ENCODE measurements at regions of chr17 and their contacts with region 1.

Region 1: GRCh38 chr17:79839363-79840268 is at the start of gene CBX4:
- DNase-seq: no peak
- ATAC-seq: peak; percentile 75
- H3K4me3 ChIP-seq: peak within 1 kb of the TSS; percentile 95
- H3K27ac ChIP-seq: peak within 1 kb of the TSS; percentile 69
- H3K4me1 ChIP-seq: peaks cover 21% of the 10 kb centered on the region
- H3K27me3 ChIP-seq: peaks cover 22 to 32% of the 10 kb centered on the region in 2 experiments
- CTCF ChIP-seq: peak; percentile 58 to 74 (median 64); a peak in 5 of 6 replicates
- EP300 ChIP-seq: no peak
- POLR2A ChIP-seq: peak; percentile 91
- RAD21 ChIP-seq: peak; percentile 18; the same call in 1 of the 2 replicates
- polyA plus RNA-seq, gene CBX4: 0.69 to 1.2 TPM

Region 2: GRCh38 chr17:79749156-79749815 is 90.3 kb before region 1 on chr17:
- CTCF ChIA-PET with region 1: interaction called, 5 read pairs
- POLR2A ChIA-PET with region 1: interaction called, 5 read pairs
- RAD21 ChIA-PET with region 1: no interaction called
- SMC1A ChIA-PET with region 1: no interaction called
- in situ Hi-C with region 1: no loop called
- intact Hi-C with region 1: loop called (anchors 5 kb)
- DNase-seq: no peak
- ATAC-seq: no peak
- H3K4me3 ChIP-seq: no peak overlapping the region
- H3K27ac ChIP-seq: no peak overlapping the region
- H3K4me1 ChIP-seq: peaks cover 13% of the 10 kb centered on the region
- H3K27me3 ChIP-seq: peaks cover 0 to 4% of the 10 kb centered on the region in 2 experiments; a peak in 2 of 4 replicates
- CTCF ChIP-seq: no peak
- EP300 ChIP-seq: no peak
- POLR2A ChIP-seq: no peak
- RAD21 ChIP-seq: no peak

Region 3: GRCh38 chr17:79796763-79797491 is 42.7 kb before region 1 on chr17 and contains the start of gene CBX8:
- CTCF ChIA-PET with region 1: interaction called, 6 read pairs
- POLR2A ChIA-PET with region 1: interaction called, 15 read pairs
- RAD21 ChIA-PET with region 1: interaction called, 10 read pairs
- SMC1A ChIA-PET with region 1: interaction called, 3 read pairs
- in situ Hi-C with region 1: no loop called
- intact Hi-C with region 1: loop called (anchors 5 kb)
- DNase-seq: peak; percentile 94
- ATAC-seq: peak; percentile 91
- H3K4me3 ChIP-seq: peak within 1 kb of the TSS; percentile 83
- H3K27ac ChIP-seq: peak within 1 kb of the TSS; percentile 64
- H3K4me1 ChIP-seq: peaks cover 29% of the 10 kb centered on the region
- H3K27me3 ChIP-seq: peaks cover 16 to 36% of the 10 kb centered on the region in 2 experiments
- CTCF ChIP-seq: peak in 1 of 3 experiments; percentile 11; a peak in 1 of 6 replicates
- EP300 ChIP-seq: no peak
- POLR2A ChIP-seq: peak; percentile 83
- RAD21 ChIP-seq: no peak
- polyA plus RNA-seq, gene CBX8: 0.03 to 0.16 TPM

Region 4: GRCh38 chr17:79803997-79804855 is 35.4 kb before region 1 on chr17:
- CTCF ChIA-PET with region 1: interaction called, 6 read pairs
- POLR2A ChIA-PET with region 1: interaction called, 8 read pairs
- RAD21 ChIA-PET with region 1: interaction called, 10 read pairs
- SMC1A ChIA-PET with region 1: interaction called, 7 read pairs
- in situ Hi-C with region 1: loop called (anchors 5 kb)
- intact Hi-C with region 1: loop called (anchors 5 kb)
- DNase-seq: peak; percentile 43
- ATAC-seq: peak; percentile 82
- H3K4me3 ChIP-seq: peak overlapping the region; percentile 34; the same call in 1 of the 2 replicates
- H3K27ac ChIP-seq: no peak overlapping the region
- H3K4me1 ChIP-seq: peaks cover 46% of the 10 kb centered on the region
- H3K27me3 ChIP-seq: peaks cover 31 to 48% of the 10 kb centered on the region in 2 experiments
- CTCF ChIP-seq: no peak
- EP300 ChIP-seq: peak in 1 of 2 experiments; percentile 38; a peak in 1 of 4 replicates
- POLR2A ChIP-seq: peak; percentile 66
- RAD21 ChIP-seq: no peak

Region 5: DNA sequence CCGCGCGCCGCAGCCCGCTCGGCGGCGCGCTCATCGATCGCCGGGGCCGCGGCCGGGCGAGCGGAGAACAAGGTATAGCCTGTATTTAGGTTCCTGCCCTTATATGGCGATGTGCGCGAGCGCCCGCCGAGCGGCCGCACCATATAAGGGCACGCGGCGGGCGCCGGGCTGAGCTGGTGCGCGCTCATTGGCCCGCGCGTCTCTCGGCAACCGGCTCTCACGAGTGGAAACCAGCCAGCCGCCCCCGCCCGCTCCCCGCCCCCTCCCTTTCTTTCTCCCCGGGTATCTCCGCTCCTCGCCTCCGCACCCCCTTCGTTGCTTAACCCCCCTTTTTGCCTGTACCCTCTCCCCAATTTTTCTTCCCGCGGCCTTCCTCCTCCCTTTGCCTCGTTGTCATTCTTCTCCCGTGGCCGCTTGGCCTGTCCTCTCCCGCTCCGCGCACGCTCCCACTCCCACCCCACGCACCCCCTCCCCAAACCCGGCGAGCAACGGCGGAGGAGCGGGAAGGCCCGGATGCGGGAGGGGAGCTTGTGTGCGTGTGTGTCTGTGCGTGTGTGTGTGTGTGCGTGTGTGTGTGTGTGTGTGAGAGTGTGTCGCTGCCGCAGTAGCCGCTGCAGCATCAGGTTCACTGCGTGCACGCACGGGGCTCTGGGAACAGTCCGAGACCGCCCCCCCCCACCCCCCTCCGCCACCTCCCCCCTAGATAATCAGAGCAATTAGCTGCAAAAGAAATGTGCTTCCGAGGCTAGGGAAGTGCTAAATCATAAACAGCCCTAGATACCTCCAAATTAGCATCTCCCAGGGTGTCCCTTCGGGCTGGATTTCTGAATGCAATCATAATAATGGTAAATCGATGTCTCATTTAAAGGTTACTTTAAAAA is 29.2 kb before region 1 on chr17:
- CTCF ChIA-PET with region 1: interaction called, 19 read pairs
- POLR2A ChIA-PET with region 1: interaction called, 10 read pairs
- RAD21 ChIA-PET with region 1: interaction called, 10 read pairs
- SMC1A ChIA-PET with region 1: interaction called, 7 read pairs
- in situ Hi-C with region 1: loop called (anchors 5 kb)
- intact Hi-C with region 1: no loop called
- DNase-seq: no peak
- ATAC-seq: peak; percentile 95
- H3K4me3 ChIP-seq: peak overlapping the region; percentile 60; the same call in 1 of the 2 replicates
- H3K27ac ChIP-seq: no peak overlapping the region
- H3K4me1 ChIP-seq: peaks cover 36% of the 10 kb centered on the region
- H3K27me3 ChIP-seq: peaks cover 35 to 46% of the 10 kb centered on the region in 2 experiments
- CTCF ChIP-seq: no peak
- EP300 ChIP-seq: no peak
- POLR2A ChIP-seq: no peak
- RAD21 ChIP-seq: no peak

Measured in GM12878 (cell line).